ENCODE measurements at regions of chr14 and their contacts with region 1.

Region 1: GRCh38 chr14:99436247-99437180 is 44.1 kb downstream of the SETD3 start:
- DNase-seq: no peak
- H3K4me3 ChIP-seq: no peak overlapping the region
- H3K27ac ChIP-seq: no peak overlapping the region
- H3K4me1 ChIP-seq: no peaks in the 10 kb centered on the region
- H3K27me3 ChIP-seq: no peaks in the 10 kb centered on the region
- CTCF ChIP-seq: no peak
- POLR2A ChIP-seq: no peak

Region 2: GRCh38 chr14:97697772-97698171 is 1738.7 kb before region 1 on chr14:
- intact Hi-C with region 1: loop called (anchors 5 kb)
- DNase-seq: no peak
- H3K4me3 ChIP-seq: no peak overlapping the region
- H3K27ac ChIP-seq: no peak overlapping the region
- H3K4me1 ChIP-seq: no peaks in the 10 kb centered on the region
- H3K27me3 ChIP-seq: peaks cover 0 to 8% of the 10 kb centered on the region in 2 donors
- CTCF ChIP-seq: no peak
- POLR2A ChIP-seq: no peak

Region 3: DNA sequence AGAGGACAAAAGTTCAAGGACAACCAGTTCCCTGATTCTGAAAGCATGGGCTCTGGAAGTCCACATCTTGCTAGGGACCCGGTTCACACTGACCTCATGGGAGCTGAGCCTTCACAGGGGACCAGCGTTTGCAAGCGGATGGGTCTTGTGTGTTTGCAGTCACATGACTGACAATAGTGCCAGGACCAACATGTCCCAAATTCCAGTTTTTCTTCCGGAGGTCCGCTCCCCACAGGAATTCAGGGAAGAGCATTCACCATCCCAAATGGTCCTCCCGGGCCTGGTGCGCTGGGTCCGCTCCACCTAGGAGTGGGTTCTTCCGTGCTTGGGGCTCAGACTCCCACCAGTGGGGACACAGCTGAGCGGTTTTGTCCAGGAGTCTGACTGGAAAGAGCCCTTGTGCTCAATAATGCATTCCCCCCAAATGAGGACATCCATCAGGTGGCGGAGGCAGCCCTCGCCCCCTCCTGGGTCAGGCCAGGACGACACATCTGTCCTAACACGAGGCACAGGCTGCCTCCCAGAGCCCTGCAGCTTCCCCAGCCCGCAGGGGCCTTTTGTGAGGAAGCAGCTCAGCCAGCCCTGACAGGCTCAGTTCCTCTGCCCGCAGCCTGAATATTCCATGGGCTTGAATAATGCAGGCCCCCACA is 72.8 kb before region 1 on chr14:
- intact Hi-C with region 1: no loop called
- DNase-seq: no peak
- H3K4me3 ChIP-seq: no peak overlapping the region
- H3K27ac ChIP-seq: no peak overlapping the region
- H3K4me1 ChIP-seq: no peaks in the 10 kb centered on the region
- H3K27me3 ChIP-seq: no peaks in the 10 kb centered on the region
- CTCF ChIP-seq: no peak
- POLR2A ChIP-seq: no peak